PC-3 (cell line): ENCODE measurements at regions of chr1 and their contacts with region 1.

Region 1: DNA sequence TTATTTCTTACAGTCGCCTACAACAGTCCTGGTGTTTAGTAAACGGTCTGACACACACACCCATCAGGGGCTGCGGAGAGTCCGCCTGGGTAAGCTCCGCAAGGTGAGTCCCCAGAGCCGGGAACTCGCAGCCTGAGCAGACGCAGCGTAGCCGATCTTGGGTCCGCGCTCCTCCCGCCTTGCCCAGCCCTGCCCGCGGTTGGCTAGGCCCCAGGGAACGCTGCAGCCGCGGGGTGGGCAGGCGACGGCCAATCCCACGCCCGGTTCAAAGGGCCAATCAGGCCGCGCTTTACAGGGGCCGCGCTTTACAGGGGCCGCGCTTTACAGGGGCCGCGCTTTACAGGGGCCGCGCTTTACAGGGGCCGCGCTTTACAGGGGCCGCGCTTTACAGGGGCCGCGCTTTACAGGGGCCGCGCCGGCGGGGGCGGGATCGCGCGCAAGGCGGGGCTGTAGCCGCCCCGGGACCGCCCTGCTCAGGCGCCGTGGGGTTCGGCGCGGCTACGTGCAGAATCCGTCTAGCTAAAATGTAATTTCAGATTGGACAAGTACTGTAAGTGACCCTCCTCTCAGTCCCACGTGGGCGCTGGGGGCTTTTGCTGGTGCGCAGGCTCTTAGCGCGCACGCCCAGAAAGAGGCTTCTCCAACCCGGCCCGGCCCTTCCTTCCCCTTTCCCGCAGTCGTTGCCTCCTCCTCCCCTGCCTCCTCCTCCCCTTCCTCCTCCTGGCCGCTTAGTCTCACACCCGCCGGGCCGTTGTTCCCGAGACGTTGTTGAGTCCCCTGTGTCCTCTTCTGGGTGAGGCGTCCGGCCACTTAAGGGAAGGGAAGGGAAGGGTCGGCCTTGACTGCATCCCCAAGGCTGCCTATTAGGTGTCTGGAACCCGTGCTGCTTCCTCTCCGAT is at the start of gene FGGY:
- DNase-seq: peak; percentile 97
- ATAC-seq: peak; percentile 90
- H3K4me3 ChIP-seq: peak within 1 kb of the TSS; percentile 88
- H3K27ac ChIP-seq: peak within 1 kb of the TSS; percentile 76
- H3K4me1 ChIP-seq: peaks cover 30% of the 10 kb centered on the region
- H3K27me3 ChIP-seq: no peaks in the 10 kb centered on the region
- CTCF ChIP-seq: no peak
- total RNA-seq, gene FGGY: 7.4 and 10.1 TPM in 2 replicates

Region 2: DNA sequence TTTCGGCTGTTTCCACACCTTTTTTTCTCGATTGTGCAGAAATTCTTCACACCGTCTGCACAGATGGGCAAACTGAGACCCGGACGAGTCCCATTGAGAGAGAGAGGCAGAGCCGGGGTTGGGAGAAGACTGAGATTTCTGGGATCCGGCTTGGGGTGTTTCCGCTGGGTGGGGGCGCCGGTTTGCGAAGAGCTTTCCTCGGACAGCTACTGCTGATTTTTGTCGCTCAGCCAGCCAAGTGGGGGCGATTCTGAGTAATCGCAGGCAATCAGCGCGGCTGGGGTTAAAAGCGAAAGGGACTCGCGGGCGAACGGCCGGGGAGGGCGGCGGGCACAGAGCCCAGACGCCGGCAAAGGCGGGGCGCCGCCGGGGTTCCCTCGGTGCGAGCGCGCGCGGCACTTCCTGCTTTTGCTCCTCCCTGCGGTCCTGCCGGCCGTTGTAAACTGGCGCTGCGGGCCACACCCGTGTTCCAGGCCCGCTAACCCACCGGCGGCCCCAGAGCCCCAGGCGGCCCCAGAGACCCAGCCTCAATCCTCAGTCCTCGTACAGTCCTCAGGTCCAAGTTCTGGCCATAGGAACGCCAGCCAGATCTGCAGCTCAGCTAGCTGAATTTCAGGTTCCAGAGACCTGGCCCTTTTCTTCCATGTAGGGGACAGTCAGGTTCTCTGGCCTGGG is 480.4 kb before region 1 on chr1:
- CTCF ChIA-PET with region 1: no interaction called
- POLR2A ChIA-PET with region 1: no interaction called
- intact Hi-C with region 1: loop called (anchors 1 kb)
- DNase-seq: peak; percentile 89
- ATAC-seq: peak; percentile 55
- H3K4me3 ChIP-seq: peak overlapping the region; percentile 90
- H3K27ac ChIP-seq: peak overlapping the region; percentile 89
- H3K4me1 ChIP-seq: peaks cover 59% of the 10 kb centered on the region
- H3K27me3 ChIP-seq: no peaks in the 10 kb centered on the region
- CTCF ChIP-seq: peak; percentile 11; the same call in 1 of the 2 replicates

Region 3: GRCh38 chr1:59427155-59427554 is 130.5 kb after region 1 on chr1:
- CTCF ChIA-PET with region 1: no interaction called
- POLR2A ChIA-PET with region 1: no interaction called
- intact Hi-C with region 1: loop called (anchors 2 kb)
- DNase-seq: peak; percentile 97
- ATAC-seq: peak; percentile 90
- H3K4me3 ChIP-seq: peak overlapping the region; percentile 26; the same call in 1 of the 2 replicates
- H3K27ac ChIP-seq: peak overlapping the region; percentile 75
- H3K4me1 ChIP-seq: peaks cover 55% of the 10 kb centered on the region
- H3K27me3 ChIP-seq: no peaks in the 10 kb centered on the region
- CTCF ChIP-seq: no peak

Region 4: GRCh38 chr1:59484096-59484495 is 187.5 kb after region 1 on chr1:
- CTCF ChIA-PET with region 1: no interaction called
- POLR2A ChIA-PET with region 1: no interaction called
- intact Hi-C with region 1: loop called (anchors 1 kb)
- DNase-seq: peak; percentile 85
- ATAC-seq: peak; percentile 67
- H3K4me3 ChIP-seq: no peak overlapping the region
- H3K27ac ChIP-seq: peak overlapping the region; percentile 55
- H3K4me1 ChIP-seq: peaks cover 55% of the 10 kb centered on the region
- H3K27me3 ChIP-seq: no peaks in the 10 kb centered on the region
- CTCF ChIP-seq: no peak

Region 5: DNA sequence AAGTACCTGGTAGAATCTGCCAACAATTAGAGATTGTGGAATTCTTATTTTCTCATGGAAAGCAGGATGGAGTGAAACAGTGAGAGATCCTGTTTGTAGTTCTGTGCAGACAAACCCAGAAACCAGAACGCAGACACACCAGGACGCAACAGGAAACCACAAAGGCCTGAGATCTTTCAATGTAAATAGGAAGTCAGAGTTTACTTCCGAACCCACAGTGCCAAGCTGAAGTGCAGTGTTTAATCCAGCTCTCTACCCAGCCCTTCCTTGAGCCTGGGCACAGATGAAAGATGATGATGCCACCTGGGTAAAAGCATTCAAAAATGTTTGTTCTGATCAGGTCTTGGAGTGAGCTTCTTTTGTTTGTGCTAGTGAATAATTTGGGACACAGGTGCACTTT is 273.9 kb after region 1 on chr1:
- CTCF ChIA-PET with region 1: no interaction called
- POLR2A ChIA-PET with region 1: no interaction called
- intact Hi-C with region 1: loop called (anchors 1 kb)
- DNase-seq: peak; percentile 60
- ATAC-seq: peak; percentile 92
- H3K4me3 ChIP-seq: no peak overlapping the region
- H3K27ac ChIP-seq: peak overlapping the region; percentile 54
- H3K4me1 ChIP-seq: peaks cover 16% of the 10 kb centered on the region
- H3K27me3 ChIP-seq: no peaks in the 10 kb centered on the region
- CTCF ChIP-seq: no peak

Region 6: GRCh38 chr1:59759156-59759925 is 462.7 kb after region 1 on chr1:
- CTCF ChIA-PET with region 1: no interaction called
- POLR2A ChIA-PET with region 1: no interaction called
- intact Hi-C with region 1: loop called (anchors 2 kb)
- DNase-seq: peak; percentile 82
- ATAC-seq: peak; percentile 95
- H3K4me3 ChIP-seq: peak overlapping the region; percentile 45; the same call in 1 of the 2 replicates
- H3K27ac ChIP-seq: no peak overlapping the region
- H3K4me1 ChIP-seq: 0 out of 2 replicates have a peak, but pooled peaks cover 5% of the 10 kb centered on the region
- H3K27me3 ChIP-seq: no peaks in the 10 kb centered on the region
- CTCF ChIP-seq: peak; percentile 95